ENCODE measurements at regions of chr1 and their contacts with region 1.

Region 1: DNA sequence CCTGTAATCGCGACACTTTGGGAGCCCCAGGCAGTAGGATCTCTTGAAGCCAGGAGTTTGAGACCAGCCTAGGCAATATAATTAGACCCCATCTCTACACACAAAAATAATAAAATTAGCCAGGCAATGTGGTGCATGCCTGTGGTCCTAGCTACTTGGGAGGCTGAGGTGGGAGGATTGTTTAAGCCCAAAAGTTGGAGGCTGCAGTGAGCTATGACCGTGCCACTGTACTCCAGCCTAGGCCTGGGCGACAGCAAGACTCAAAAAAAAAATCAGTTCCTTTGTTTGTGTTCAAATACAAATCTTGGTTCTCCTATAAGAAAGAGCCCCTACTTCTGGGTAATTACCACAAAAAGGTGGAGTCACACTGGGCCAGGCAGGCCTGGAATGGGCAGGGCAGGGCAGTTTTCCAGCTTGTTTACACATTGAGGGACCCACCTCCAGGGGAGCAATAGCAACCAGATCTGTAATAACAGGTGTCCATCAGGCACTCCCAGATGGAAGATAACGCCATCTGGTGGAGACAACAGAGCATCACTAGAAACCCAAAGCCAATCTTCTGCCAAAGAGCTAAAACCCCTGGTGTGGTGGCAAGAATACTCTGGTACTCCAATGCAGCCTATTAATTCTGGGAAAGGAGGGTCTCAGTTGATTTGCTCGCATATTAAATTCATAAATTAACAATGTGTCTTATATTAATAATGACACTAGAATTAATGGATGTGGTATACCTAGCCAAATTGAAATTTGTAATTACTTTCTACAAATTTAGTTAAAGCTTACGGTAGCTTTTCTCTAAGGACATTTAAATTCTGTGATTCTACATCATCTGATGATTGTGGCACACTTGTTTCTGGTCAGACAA is 13.2 kb downstream of the PPP1R15B start:
- DNase-seq: peak; percentile 82
- CTCF ChIP-seq: peak; percentile 67

Region 2: DNA sequence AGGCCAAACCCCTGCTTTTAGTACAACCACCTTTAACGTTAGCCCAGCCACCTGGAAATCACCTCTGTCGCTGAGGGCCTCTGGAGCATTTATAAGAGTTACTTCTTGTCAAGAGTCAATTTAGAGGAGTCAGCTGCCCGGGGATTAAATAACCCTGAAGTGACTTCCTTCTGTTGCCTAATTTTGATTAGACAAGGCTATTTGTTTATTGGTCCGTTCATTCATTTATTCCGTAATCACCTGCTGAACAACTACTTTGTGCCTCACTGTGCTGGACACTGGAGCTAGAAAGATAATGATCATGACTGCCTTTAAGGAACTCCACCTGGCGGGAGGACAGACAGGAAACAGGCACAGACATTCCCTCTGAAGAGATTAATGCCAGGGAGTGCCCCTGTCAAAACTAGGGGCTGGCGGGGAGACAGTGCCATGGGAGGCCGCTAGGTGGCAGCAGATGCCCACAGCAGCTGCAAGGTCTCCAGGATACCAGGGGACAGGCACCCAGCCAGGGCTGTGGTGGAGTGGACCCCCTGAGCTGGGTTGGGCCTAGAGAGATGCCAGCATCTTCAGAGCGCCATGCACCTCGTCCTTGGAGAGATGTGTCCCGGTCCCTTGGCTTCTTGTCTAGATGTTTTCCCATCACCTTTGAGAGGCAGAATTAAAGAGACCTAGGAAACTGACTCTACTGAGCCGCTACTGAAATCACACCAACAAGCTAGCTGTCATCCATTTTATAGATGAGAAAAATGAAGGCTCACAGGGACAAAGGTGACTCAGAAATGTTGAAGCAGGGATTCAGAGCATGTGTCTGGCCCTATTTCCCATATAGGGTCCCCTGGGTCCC is 236.0 kb before region 1 on chr1:
- CTCF ChIA-PET with region 1: interaction called, 39 read pairs
- POLR2A ChIA-PET with region 1: no interaction called
- DNase-seq: peak; percentile 85
- CTCF ChIP-seq: peak; percentile 98

Region 3: DNA sequence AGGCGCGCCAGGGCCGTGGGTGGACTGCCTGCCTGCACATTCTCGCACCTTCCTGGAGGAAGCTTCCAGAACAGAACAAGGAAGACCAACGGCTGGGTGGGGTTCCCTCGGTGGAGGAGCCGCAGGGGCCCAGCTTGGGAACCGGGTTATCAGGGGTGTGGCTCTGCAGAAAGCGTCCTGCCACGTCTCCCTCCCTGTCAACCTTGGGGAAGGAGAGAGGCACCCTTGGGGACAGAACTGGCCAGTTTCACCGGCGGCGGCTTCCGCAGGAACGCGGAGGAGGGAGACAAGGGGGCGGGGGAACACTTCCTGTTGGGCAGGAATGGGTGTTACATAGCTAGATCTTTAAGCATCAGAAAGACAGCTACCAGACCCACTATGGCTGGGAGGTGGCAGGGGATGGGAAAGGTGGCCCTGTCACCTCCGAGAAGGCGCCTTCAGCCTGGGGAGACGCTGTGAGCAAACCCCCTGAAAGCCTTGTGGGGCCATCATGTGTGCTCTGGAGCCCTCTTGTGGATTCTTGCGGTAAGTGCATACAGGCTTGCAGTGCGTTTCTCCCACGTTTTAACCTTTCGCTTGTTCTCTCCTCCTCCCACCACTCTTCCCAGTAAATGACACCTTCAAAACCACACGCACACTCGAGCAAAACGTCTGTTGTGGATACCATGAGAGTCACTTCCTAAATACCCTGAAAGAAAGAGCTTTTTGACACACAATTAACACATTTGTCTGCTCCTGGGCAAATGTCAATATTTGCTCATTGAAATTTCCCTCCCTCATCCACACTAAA is 34.9 kb before region 1 on chr1:
- CTCF ChIA-PET with region 1: interaction called, 17 read pairs
- POLR2A ChIA-PET with region 1: interaction called, 3 read pairs
- DNase-seq: peak; percentile 83
- CTCF ChIP-seq: peak; percentile 86

Region 4: GRCh38 chr1:204377795-204378608 is 20.4 kb before region 1 on chr1:
- CTCF ChIA-PET with region 1: interaction called, 59 read pairs
- POLR2A ChIA-PET with region 1: interaction called, 6 read pairs
- DNase-seq: peak; percentile 69
- CTCF ChIP-seq: no peak

Region 5: GRCh38 chr1:204411451-204412204 is 13.2 kb after region 1 on chr1 and contains the start of gene PPP1R15B:
- CTCF ChIA-PET with region 1: interaction called, 88 read pairs
- POLR2A ChIA-PET with region 1: interaction called, 7 read pairs
- DNase-seq: peak; percentile 97
- CTCF ChIP-seq: no peak

Region 6: GRCh38 chr1:204431310-204432165 is 33.1 kb after region 1 on chr1:
- CTCF ChIA-PET with region 1: interaction called, 17 read pairs
- POLR2A ChIA-PET with region 1: no interaction called
- DNase-seq: peak; percentile 82
- CTCF ChIP-seq: peak; percentile 91

Region 7: GRCh38 chr1:204506961-204507387 is 108.5 kb after region 1 on chr1:
- CTCF ChIA-PET with region 1: interaction called, 12 read pairs
- POLR2A ChIA-PET with region 1: no interaction called
- DNase-seq: peak; percentile 56
- CTCF ChIP-seq: no peak

Measured in GM10248 (cell line).